MCF 10A (cell line): ENCODE measurements at regions of chr4 and their contacts with region 1.

Region 1: DNA sequence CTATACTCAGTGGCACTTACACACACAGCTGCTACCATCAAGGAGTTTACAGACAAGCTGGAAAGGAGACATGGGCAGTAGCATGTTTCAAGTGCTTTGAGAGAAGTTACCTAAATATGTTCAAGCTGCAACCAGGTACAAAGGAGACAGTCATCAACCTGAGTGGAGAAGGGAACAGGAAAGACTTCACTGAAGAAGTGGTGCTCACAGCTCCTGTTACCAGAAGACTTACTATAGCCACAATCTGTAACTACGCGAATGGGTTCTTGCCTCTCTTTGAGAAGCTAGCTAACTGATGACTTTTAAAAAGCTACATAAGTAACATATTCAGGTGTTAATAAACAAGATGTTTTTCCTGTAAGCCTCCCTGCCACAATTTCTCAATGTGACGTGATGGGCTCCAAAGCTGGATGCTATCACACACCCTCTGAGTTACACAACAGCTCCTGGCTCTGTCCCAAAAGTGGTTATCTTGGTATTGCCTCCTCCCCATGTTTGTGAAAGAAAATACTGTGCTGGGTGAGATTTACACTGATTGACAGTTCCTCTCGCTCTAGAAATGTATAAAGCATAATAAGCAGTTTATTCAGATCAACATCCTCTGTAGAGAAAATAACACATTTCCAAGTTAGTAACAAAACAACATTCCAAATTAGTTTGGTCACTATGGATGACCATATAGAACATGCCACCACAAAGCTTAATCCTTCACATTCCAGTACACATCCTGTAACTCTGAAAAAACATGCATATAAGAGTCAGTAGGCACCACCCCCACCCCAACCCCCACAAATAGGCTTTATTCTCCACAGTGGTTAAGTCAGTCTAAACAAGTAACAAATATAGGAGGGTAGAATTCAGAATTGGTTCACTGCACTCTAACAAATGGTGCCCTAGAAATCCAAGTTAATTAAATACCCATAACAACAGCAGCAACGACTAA is 81.8 kb downstream of the FRYL start:
- DNase-seq: peak; percentile 97
- H3K4me3 Mint-ChIP-seq: peak overlapping the region; percentile 43
- H3K27ac Mint-ChIP-seq: peak overlapping the region; percentile 80
- H3K4me1 Mint-ChIP-seq: peaks cover 34% of the 10 kb centered on the region
- H3K27me3 Mint-ChIP-seq: no peaks in the 10 kb centered on the region
- CTCF ChIP-seq: no peak

Region 2: DNA sequence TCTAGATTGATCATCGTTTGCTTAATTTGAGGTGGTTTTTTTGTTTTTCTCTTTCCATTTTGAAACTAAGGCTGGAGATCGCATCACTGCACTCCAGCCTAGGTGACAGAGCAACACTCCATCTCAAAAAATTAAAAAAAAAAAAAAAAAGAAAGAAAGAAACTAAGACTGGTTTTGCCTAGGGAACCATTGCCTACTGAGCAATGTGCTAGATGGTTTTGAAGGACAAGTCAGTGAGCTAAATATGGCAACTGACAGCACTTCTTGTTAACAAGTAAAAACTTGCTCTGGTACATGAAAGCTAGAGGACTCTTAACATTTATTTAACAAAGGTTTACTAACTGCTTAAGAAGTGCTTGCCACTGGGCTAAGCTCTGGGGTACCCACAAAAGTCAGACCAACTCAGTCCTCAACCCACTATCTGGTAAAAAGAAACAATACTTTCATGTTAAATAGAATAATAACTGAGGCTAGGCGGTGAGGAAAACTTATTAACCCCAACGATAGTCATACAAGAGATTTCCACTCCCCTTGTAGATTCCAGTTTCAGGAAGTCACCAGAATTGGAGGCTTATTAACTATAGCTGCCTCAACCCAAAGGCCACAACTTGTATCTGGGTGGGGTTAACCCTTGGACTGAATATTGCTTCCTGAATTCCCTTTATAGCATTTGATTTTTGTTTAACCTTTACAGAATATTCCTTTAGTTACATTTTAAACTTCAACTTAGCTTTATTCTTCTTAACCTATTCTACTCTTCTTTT is 29.9 kb before region 1 on chr4:
- CTCF ChIA-PET with region 1: interaction called, 6 read pairs
- POLR2A ChIA-PET with region 1: interaction called, 15 read pairs
- intact Hi-C with region 1: no loop called
- DNase-seq: peak; percentile 22
- H3K4me3 Mint-ChIP-seq: no peak overlapping the region
- H3K27ac Mint-ChIP-seq: peak overlapping the region; percentile 1
- H3K4me1 Mint-ChIP-seq: peaks cover 28% of the 10 kb centered on the region
- H3K27me3 Mint-ChIP-seq: no peaks in the 10 kb centered on the region
- CTCF ChIP-seq: no peak

Region 3: DNA sequence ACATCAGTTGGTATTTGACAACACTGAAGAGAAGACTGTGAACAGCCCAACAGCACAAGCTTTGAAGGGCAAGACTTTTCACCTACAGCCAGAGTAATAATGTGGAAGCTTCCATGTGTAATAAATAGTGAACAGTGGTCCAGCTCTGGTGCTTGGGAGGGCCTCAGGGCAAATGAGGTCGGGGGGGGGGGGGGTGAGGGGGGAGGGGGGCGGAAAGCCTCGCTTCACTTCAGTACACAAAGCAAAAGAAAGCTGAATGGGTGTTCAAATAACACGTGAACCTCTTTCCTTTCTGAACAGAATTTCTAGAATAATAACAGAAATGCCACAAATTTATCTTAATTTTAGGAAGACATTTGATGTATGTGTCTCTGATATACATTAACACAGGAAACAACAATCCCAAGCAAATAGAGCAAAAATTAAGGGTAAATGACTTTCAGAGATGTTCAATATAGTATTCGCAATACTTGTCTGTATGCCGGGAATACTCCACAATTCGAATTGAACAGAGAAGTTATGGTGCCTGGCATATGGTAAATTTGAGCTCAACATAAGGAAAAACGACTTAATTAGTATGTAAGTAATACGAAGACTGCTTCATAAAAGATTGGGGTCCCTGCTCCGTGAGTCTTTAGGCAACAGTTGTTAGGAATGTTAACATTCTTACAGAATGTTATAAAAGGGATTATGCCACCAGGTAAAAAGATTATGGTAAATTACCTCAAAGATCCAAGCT is 10.8 kb before region 1 on chr4:
- CTCF ChIA-PET with region 1: interaction called, 4 read pairs
- POLR2A ChIA-PET with region 1: interaction called, 26 read pairs
- intact Hi-C with region 1: no loop called
- DNase-seq: no peak
- H3K4me3 Mint-ChIP-seq: no peak overlapping the region
- H3K27ac Mint-ChIP-seq: no peak overlapping the region
- H3K4me1 Mint-ChIP-seq: peaks cover 11% of the 10 kb centered on the region
- H3K27me3 Mint-ChIP-seq: no peaks in the 10 kb centered on the region
- CTCF ChIP-seq: no peak

Region 4: GRCh38 chr4:48774760-48775710 is 76.7 kb after region 1 on chr4:
- CTCF ChIA-PET with region 1: interaction called, 7 read pairs
- POLR2A ChIA-PET with region 1: interaction called, 223 read pairs
- intact Hi-C with region 1: loop called (anchors 1 kb)
- DNase-seq: no peak
- H3K4me3 Mint-ChIP-seq: no peak overlapping the region
- H3K27ac Mint-ChIP-seq: no peak overlapping the region
- H3K4me1 Mint-ChIP-seq: peaks cover 22% of the 10 kb centered on the region
- H3K27me3 Mint-ChIP-seq: no peaks in the 10 kb centered on the region
- CTCF ChIP-seq: no peak

Region 5: DNA sequence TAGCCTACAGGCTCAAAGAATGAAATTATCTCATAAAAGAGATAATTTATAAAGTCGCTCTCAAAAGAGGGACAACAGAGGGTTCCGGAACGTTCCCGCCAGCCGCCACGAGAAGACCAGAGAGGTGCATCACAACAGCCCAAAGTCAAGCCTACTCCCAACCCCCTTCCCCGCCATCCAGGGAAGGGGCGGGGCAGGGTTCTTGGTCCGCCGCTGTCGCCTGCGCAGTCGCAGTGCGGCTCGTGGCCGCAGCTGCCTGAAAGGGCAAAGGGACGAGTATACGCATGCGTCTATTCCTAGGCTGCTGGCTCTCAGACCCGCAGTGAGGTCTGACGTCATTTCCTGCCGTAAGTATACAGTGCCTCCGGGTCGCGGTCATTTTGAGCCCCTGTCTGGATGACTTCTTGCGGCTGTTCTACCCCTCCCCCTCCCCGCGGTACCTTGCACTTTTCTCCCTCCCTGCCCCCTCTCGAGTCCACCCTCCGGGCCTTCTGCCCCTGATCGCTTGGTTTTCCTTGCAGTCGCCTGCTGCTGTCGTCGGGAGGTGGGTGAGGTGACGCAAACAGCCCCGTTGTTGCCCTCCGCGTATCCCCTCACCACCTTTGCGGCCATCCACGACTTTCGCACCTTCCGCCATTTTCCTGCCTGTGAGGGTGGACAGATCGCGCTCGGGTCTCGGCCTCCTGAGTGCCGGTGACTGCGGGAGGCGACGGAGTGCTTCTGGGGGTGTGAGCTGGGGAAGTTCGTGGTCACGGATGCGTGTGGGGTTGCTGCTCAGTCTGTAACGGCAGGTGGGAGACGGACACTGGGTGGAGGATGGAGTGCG is 132.6 kb after region 1 on chr4 and contains the start of gene OCIAD1:
- CTCF ChIA-PET with region 1: no interaction called
- POLR2A ChIA-PET with region 1: interaction called, 9 read pairs
- intact Hi-C with region 1: loop called (anchors 2 kb)
- DNase-seq: peak; percentile 99
- H3K4me3 Mint-ChIP-seq: peak within 1 kb of the TSS; percentile 95
- H3K27ac Mint-ChIP-seq: peak within 1 kb of the TSS; percentile 97
- H3K4me1 Mint-ChIP-seq: peaks cover 5% of the 10 kb centered on the region
- H3K27me3 Mint-ChIP-seq: no peaks in the 10 kb centered on the region
- CTCF ChIP-seq: no peak
- total RNA-seq, gene OCIAD1: 207 and 224 TPM in 2 replicates

Region 6: DNA sequence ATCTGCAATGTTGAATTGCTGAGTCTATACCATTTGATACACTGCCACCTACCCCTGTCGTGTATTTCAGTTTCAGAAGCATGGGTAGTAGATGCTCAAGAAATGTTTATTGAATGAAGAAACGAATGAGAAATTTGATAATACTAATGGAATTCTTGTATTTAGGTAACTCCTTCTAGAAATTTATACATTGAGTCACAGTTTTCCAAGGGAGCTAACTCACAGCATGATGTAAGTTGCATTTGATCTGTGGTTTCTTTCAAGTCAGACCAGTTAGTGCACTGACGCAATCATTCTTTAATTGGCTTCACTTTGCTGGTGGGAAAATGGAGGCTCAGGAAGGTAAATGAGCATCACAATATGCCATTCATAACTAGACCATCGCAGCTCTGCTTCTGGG is 270.5 kb after region 1 on chr4:
- CTCF ChIA-PET with region 1: no interaction called
- POLR2A ChIA-PET with region 1: interaction called, 6 read pairs
- intact Hi-C with region 1: loop called (anchors 5 kb)
- DNase-seq: peak; percentile 68
- H3K4me3 Mint-ChIP-seq: no peak overlapping the region
- H3K27ac Mint-ChIP-seq: no peak overlapping the region
- H3K4me1 Mint-ChIP-seq: peaks cover 30% of the 10 kb centered on the region
- H3K27me3 Mint-ChIP-seq: no peaks in the 10 kb centered on the region
- CTCF ChIP-seq: no peak